Activated naive CD4-positive, alpha-beta T cell treated with anti-CD3 and anti-CD28 coated beads for 36 hours (primary cell): ENCODE measurements at regions of chr12 and their contacts with region 1.

Region 1: GRCh38 chr12:31406345-31406744 is 80.4 kb upstream of the SINHCAF start:
- DNase-seq: no peak
- H3K4me3 Mint-ChIP-seq: no peak overlapping the region
- H3K27ac Mint-ChIP-seq: no peak overlapping the region
- H3K4me1 Mint-ChIP-seq: no peaks in the 10 kb centered on the region
- H3K27me3 Mint-ChIP-seq: no peaks in the 10 kb centered on the region

Region 2: GRCh38 chr12:31298513-31298910 is 107.8 kb before region 1 on chr12:
- CTCF ChIA-PET with region 1: no interaction called
- intact Hi-C with region 1: no loop called
- DNase-seq: no peak
- H3K4me3 Mint-ChIP-seq: no peak overlapping the region
- H3K27ac Mint-ChIP-seq: peak overlapping the region; percentile 83
- H3K4me1 Mint-ChIP-seq: peaks cover 40% of the 10 kb centered on the region
- H3K27me3 Mint-ChIP-seq: no peaks in the 10 kb centered on the region

Region 3: GRCh38 chr12:31631784-31632183 is 225.4 kb after region 1 on chr12:
- CTCF ChIA-PET with region 1: interaction called, 46 read pairs
- intact Hi-C with region 1: loop called (anchors 1 kb)
- DNase-seq: no peak
- H3K4me3 Mint-ChIP-seq: no peak overlapping the region
- H3K27ac Mint-ChIP-seq: no peak overlapping the region
- H3K4me1 Mint-ChIP-seq: peaks cover 4% of the 10 kb centered on the region
- H3K27me3 Mint-ChIP-seq: no peaks in the 10 kb centered on the region

Region 4: DNA sequence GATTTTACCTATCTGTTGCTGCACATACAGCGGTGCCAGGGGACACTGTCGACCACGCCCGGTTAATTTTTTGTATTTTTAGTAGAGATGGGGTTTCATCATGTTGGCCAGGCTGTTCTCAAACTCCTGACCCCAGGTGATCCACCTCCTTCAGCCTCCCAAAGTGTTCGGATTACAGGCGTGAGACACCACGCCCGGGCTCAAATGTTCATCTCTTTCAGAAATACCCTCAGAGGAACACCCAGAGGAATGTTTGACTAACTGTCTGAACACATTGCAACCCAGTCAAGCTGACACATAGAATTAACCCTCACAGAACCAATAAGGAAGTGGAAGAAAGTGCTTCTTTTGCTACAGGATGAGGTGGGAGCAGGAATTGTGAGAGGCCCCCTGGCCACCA is 238.2 kb after region 1 on chr12:
- CTCF ChIA-PET with region 1: interaction called, 43 read pairs
- intact Hi-C with region 1: no loop called
- DNase-seq: no peak
- H3K4me3 Mint-ChIP-seq: no peak overlapping the region
- H3K27ac Mint-ChIP-seq: no peak overlapping the region
- H3K4me1 Mint-ChIP-seq: no peaks in the 10 kb centered on the region
- H3K27me3 Mint-ChIP-seq: no peaks in the 10 kb centered on the region